ENCODE measurements at regions of chr3 and their contacts with region 1.

Region 1: DNA sequence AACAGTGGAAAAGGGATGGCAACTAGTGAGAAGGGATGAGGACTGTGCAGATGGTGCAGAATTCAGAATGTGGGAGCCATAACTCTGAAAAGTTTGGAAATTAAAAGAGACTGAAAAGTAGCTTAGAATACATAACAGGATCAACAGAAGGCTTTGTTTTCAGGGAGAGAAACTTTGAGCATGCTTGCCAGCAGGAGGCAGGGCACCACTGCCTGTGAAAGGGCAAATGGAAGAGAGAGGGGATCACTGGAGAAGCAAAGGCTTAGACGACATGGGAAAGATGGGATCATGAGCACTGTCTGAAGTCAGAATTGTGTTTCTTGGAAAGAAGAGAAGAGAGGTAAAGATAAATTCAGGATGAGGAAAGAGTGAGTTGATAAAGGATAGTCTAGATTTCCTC is 99.6 kb downstream of the ABI3BP start:
- DNase-seq: peak in 1 of 2 donors; percentile 19
- ATAC-seq: peak in 2 of 8 donors; percentile 52 to 66
- H3K4me3 ChIP-seq: no peak overlapping the region
- H3K27ac ChIP-seq: peak overlapping the region in 1 of 10 donors; percentile 71
- H3K4me1 ChIP-seq: peaks cover 0 to 4% (median 0%) of the 10 kb centered on the region in 9 donors
- H3K27me3 ChIP-seq: no peaks in the 10 kb centered on the region
- CTCF ChIP-seq: peak in 8 of 9 donors; percentile 24 to 57 (median 48)

Region 2: DNA sequence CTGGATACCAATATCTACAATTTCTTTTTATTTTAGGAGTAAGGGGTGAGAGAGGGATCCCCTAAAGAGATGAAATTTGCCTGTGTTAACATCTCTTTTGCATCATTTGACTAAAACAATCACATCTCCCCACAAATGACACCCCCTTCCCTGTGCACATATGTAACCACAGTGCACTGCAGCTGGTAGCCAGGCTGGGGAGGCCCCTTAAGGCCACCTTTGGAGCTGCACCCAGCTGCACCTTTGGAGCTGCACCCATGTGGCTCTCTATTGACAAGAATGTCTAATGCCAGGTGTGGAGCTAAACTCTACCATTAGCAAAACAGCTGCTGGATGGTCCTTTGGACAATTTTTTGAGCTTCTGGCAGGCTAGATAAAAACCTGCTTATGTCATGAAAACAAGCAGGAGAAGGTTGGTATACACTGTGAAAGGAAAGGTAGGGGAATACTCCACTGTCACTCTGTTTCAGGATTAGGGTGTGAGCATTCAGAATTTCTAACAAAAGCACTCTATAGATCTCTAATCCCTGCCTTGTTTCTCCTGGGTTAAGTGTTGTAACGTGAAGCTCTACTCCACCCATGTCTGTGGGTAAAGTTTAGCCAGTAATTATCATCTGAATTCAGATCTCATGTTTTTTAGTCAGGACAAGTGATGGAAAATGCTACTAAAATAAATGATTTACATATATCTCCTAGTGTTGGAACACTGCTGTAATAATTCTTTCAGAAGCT is 132.2 kb before region 1 on chr3:
- intact Hi-C with region 1: no loop called
- DNase-seq: no peak
- ATAC-seq: no peak
- H3K4me3 ChIP-seq: no peak overlapping the region
- H3K27ac ChIP-seq: no peak overlapping the region
- H3K4me1 ChIP-seq: peaks cover 0 to 23% (median 3%) of the 10 kb centered on the region in 9 donors
- H3K27me3 ChIP-seq: no peaks in the 10 kb centered on the region
- CTCF ChIP-seq: no peak

Region 3: GRCh38 chr3:100928638-100929428 is 35.2 kb after region 1 on chr3:
- intact Hi-C with region 1: no loop called
- DNase-seq: peak in 1 of 2 donors; percentile 13
- ATAC-seq: peak in 6 of 8 donors; percentile 45 to 91 (median 62)
- H3K4me3 ChIP-seq: no peak overlapping the region
- H3K27ac ChIP-seq: peak overlapping the region in 6 of 10 donors; percentile 14 to 75 (median 37)
- H3K4me1 ChIP-seq: peaks cover 0 to 6% (median 0%) of the 10 kb centered on the region in 9 donors
- H3K27me3 ChIP-seq: no peaks in the 10 kb centered on the region
- CTCF ChIP-seq: no peak

Region 4: DNA sequence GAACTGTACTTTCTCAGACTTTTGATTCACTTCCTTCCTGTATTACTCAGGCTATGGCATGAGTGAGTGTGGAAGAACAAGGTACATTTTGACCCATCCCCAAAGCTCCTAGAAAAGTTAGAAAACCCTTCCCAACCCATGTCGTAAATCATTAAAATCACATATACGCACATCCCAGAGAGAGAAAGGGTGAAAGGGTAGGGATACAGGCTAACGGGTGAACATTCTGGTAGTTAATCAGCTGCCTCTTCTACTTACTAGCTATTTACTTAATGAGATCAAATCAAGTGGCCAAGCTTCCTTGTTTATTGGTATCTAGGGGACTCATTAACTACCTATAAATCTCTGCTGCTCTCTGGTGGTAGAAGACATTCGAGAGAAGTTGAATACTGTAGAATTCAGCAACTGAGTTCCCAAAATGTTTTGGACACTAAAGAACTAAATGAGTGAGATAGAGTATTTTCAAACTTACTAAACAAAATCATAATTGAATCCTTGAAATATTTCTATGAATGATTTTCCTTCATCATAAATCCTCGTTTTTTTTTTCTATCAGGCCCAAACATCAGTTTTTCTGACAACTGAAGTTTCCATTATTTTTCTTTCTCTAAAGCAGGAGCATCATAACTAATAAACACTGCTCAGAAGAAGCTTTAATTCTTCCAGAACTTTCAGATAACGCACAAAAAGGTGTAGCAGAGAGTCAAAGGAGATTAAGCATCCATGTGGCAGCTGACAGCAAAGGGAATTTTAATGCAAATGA is 302.5 kb after region 1 on chr3:
- intact Hi-C with region 1: loop called in 9 of 10 experiments (anchors 1 to 10 kb)
- DNase-seq: peak in 1 of 2 donors; percentile 10
- ATAC-seq: peak in 7 of 8 donors; percentile 63 to 87 (median 78)
- H3K4me3 ChIP-seq: no peak overlapping the region
- H3K27ac ChIP-seq: no peak overlapping the region
- H3K4me1 ChIP-seq: peaks cover 0 to 4% (median 0%) of the 10 kb centered on the region in 9 donors
- H3K27me3 ChIP-seq: no peaks in the 10 kb centered on the region
- CTCF ChIP-seq: peak; percentile 11 to 77 (median 62)